ENCODE measurements at regions of chr7 and their contacts with region 1.

Region 1: GRCh38 chr7:138478499-138478908 is 18.4 kb downstream of the TRIM24 start:
- DNase-seq: peak in 2 of 3 donors; percentile 55 to 63
- H3K4me3 ChIP-seq: peak overlapping the region in 2 of 7 experiments; percentile 2 to 13
- H3K27ac ChIP-seq: peak overlapping the region in 1 of 2 experiments; percentile 51
- H3K4me1 ChIP-seq: peaks cover 0 to 48% (median 29%) of the 10 kb centered on the region in 4 experiments
- H3K27me3 ChIP-seq: no peaks in the 10 kb centered on the region

Region 2: GRCh38 chr7:138303943-138304495 is 174.5 kb before region 1 on chr7:
- CTCF ChIA-PET with region 1: no interaction called
- POLR2A ChIA-PET with region 1: no interaction called
- DNase-seq: no peak
- H3K4me3 ChIP-seq: no peak overlapping the region
- H3K27ac ChIP-seq: no peak overlapping the region
- H3K4me1 ChIP-seq: peaks cover 0 to 2% (median 0%) of the 10 kb centered on the region in 4 experiments
- H3K27me3 ChIP-seq: no peaks in the 10 kb centered on the region

Region 3: DNA sequence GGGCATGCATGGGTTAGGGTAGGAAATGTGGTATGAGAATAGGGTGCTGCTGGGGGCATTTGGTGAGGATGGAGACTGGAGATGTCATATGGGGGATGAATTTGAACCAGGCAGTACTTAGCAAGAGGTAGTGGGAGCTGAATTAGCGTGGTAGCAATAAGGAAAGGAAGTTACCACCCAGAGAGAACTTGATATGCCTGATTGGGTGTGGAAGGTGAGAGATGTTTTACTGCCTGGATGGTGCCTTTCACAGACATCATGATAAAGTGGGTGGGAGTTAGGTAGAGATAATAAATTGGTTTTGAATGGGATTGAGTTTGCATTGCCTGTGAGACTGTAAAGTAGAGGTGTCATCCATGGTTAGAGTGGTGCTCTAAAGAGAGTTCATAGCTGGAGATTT is 28.3 kb after region 1 on chr7:
- CTCF ChIA-PET with region 1: interaction called, 12 read pairs
- POLR2A ChIA-PET with region 1: no interaction called
- DNase-seq: no peak
- H3K4me3 ChIP-seq: no peak overlapping the region
- H3K27ac ChIP-seq: no peak overlapping the region
- H3K4me1 ChIP-seq: peaks cover 0 to 5% (median 0%) of the 10 kb centered on the region in 4 experiments
- H3K27me3 ChIP-seq: no peaks in the 10 kb centered on the region

Region 4: GRCh38 chr7:138608275-138608674 is 129.8 kb after region 1 on chr7:
- CTCF ChIA-PET with region 1: no interaction called
- POLR2A ChIA-PET with region 1: no interaction called
- DNase-seq: peak in 2 of 3 donors; percentile 70 to 84
- H3K4me3 ChIP-seq: peak overlapping the region in 1 of 7 experiments; percentile 5
- H3K27ac ChIP-seq: no peak overlapping the region
- H3K4me1 ChIP-seq: peaks cover 4 to 54% (median 34%) of the 10 kb centered on the region in 4 experiments
- H3K27me3 ChIP-seq: no peaks in the 10 kb centered on the region

Measured in common myeloid progenitor, CD34-positive (primary cell).